PC-9 (cell line): ENCODE measurements at regions of chr3 and their contacts with region 1.

Region 1: GRCh38 chr3:186570096-186570940 is at the start of gene DNAJB11:
- DNase-seq: peak; percentile 99 to 100
- H3K4me3 ChIP-seq: peak within 1 kb of the TSS; percentile 80
- H3K27ac ChIP-seq: peak within 1 kb of the TSS; percentile 80
- H3K4me1 ChIP-seq: peaks cover 31% of the 10 kb centered on the region
- H3K27me3 ChIP-seq: no peaks in the 10 kb centered on the region
- CTCF ChIP-seq: no peak
- total RNA-seq, gene DNAJB11: 53.8 and 71.3 TPM in 2 replicates

Region 2: GRCh38 chr3:186108941-186109865 is 461.1 kb before region 1 on chr3 and contains the start of gene ETV5:
- CTCF ChIA-PET with region 1: no interaction called
- POLR2A ChIA-PET with region 1: interaction called, 3 read pairs
- intact Hi-C with region 1: loop called (anchors 10 kb)
- DNase-seq: peak; percentile 100
- H3K4me3 ChIP-seq: peak within 1 kb of the TSS; percentile 87
- H3K27ac ChIP-seq: peak within 1 kb of the TSS; percentile 80
- H3K4me1 ChIP-seq: peaks cover 40% of the 10 kb centered on the region
- H3K27me3 ChIP-seq: no peaks in the 10 kb centered on the region
- CTCF ChIP-seq: no peak
- total RNA-seq, gene ETV5: 39.3 and 65.7 TPM in 2 replicates

Region 3: GRCh38 chr3:186193534-186194450 is 376.5 kb before region 1 on chr3:
- CTCF ChIA-PET with region 1: no interaction called
- POLR2A ChIA-PET with region 1: no interaction called
- intact Hi-C with region 1: no loop called
- DNase-seq: no peak
- H3K4me3 ChIP-seq: no peak overlapping the region
- H3K27ac ChIP-seq: no peak overlapping the region
- H3K4me1 ChIP-seq: no peaks in the 10 kb centered on the region
- H3K27me3 ChIP-seq: no peaks in the 10 kb centered on the region
- CTCF ChIP-seq: no peak

Region 4: DNA sequence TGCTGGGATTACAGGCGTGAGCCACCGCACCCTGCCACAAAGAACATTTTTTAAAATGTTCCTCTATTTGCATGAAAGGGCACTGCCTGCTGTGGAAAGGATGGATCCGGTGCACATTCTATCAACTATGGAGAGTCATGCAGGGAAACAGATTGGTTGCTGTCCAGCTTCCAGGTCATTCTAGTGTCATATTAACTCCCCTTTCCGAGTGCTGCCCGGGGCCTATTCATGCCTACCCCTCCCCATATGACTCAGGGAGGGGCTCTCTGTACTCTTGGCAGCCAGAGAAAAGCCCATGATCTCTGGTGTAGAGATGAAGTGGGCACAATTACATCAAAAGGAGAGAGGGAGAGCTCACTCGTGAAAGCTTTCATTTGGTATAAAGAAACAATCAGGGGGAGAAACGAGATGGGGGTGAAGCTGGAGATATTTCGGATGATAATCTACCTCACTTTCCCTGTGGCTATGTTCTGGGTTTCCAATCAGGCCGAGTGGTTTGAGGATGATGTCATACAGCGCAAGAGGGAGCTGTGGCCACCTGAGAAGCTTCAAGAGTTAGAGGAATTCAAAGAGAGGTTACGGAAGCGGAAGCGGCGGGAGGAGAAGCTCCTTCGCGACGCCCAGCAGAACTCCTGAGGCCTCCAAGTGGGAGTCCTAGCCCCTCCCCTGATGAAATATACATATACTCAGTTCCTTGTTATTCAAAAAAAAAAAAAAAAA is 26.4 kb after region 1 on chr3:
- CTCF ChIA-PET with region 1: no interaction called
- POLR2A ChIA-PET with region 1: interaction called, 14 read pairs
- intact Hi-C with region 1: no loop called
- DNase-seq: peak; percentile 72 to 79
- H3K4me3 ChIP-seq: no peak overlapping the region
- H3K27ac ChIP-seq: peak overlapping the region; percentile 48
- H3K4me1 ChIP-seq: peaks cover 24% of the 10 kb centered on the region
- H3K27me3 ChIP-seq: no peaks in the 10 kb centered on the region
- CTCF ChIP-seq: no peak

Region 5: GRCh38 chr3:186754006-186754405 is 183.7 kb after region 1 on chr3:
- CTCF ChIA-PET with region 1: no interaction called
- POLR2A ChIA-PET with region 1: interaction called, 3 read pairs
- intact Hi-C with region 1: loop called (anchors 5 kb)
- DNase-seq: no peak
- H3K4me3 ChIP-seq: peak overlapping the region; percentile 46; the same call in 1 of the 2 replicates
- H3K27ac ChIP-seq: peak overlapping the region; percentile 91
- H3K4me1 ChIP-seq: peaks cover 31% of the 10 kb centered on the region
- H3K27me3 ChIP-seq: no peaks in the 10 kb centered on the region
- CTCF ChIP-seq: no peak

Region 6: DNA sequence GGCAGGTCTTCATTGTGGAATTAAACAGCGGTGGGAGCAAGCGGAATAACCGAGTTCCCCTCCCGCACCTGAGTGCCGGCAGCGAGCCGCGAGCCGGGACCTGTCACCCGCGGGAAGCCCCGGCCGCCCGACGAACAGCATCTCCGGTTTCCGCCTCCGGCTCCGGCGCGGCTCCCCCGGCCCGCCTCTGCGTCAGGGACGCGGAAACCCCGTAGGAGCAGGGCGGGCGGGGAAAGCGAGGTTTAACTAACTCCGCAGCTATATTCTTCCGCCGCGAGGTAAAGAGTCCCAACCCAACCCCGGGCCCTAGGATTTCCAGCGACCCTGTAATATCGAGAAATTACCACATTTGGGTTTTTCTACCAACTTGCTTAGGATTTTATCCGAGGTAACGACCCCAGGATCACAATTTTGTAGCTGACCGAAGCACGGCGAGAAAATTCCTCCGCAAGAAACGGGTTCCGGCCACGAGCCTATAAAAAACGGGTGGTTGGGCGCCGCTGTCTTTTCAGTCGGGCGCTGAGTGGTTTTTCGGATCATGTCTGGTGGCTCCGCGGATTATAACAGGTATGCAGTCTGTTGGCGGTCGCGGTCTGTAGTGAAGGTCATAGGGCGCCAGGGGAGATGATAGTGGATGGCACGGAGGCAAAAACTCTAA is 212.9 kb after region 1 on chr3 and contains the start of gene EIF4A2:
- CTCF ChIA-PET with region 1: interaction called, 3 read pairs
- POLR2A ChIA-PET with region 1: interaction called, 9 read pairs
- intact Hi-C with region 1: loop called (anchors 1 kb)
- DNase-seq: peak; percentile 85 to 95
- H3K4me3 ChIP-seq: peak within 1 kb of the TSS; percentile 92
- H3K27ac ChIP-seq: peak within 1 kb of the TSS; percentile 93
- H3K4me1 ChIP-seq: peaks cover 34% of the 10 kb centered on the region
- H3K27me3 ChIP-seq: no peaks in the 10 kb centered on the region
- CTCF ChIP-seq: no peak
- total RNA-seq, gene EIF4A2: 446 and 618 TPM in 2 replicates

Region 7: GRCh38 chr3:186821429-186822367 is 251.4 kb after region 1 on chr3:
- CTCF ChIA-PET with region 1: no interaction called
- POLR2A ChIA-PET with region 1: no interaction called
- intact Hi-C with region 1: loop called (anchors 5 kb)
- DNase-seq: no peak
- H3K4me3 ChIP-seq: no peak overlapping the region
- H3K27ac ChIP-seq: no peak overlapping the region
- H3K4me1 ChIP-seq: peaks cover 9% of the 10 kb centered on the region
- H3K27me3 ChIP-seq: no peaks in the 10 kb centered on the region
- CTCF ChIP-seq: peak; percentile 92

Region 8: DNA sequence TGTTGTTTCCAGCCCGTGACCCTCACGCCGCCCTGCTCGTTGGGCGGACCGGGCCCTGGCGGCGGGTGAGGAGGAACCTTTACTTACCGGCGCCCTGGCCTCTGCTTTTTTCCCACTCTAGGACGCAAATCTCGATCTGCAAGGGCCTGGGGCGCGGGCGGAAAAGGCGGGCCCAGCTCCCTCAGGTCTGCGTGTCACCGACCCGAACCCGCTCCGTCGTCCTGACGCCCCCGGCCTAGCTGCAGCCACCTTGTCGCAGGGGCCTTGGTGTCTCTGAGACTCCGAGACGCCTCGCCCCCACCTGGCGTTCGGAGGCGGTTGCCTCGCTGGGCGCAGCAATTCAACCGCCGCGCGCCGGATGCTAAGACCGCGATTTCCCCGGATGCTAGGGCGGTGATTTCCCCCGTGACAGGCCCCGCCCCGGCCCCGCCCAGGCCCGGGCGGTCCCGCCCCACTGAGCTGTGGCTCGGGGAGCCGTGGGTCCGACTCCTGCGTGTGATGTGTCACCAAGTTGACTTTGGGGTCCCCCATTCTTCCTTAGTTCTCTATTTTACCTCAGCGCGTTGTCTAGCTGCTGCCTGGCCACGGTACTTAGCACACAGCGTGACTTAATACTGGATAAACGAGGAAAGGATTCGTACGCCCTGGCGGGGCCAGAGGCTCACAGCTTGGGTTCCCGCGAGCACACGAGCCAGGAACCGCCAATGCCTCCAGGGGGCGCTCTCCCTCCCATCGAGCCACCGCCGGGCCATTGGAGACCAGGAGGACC is 569.0 kb after region 1 on chr3 and contains the start of gene RPL39L:
- CTCF ChIA-PET with region 1: no interaction called
- POLR2A ChIA-PET with region 1: interaction called, 11 read pairs
- intact Hi-C with region 1: no loop called
- DNase-seq: peak; percentile 83 to 92
- H3K4me3 ChIP-seq: peak within 1 kb of the TSS; percentile 73
- H3K27ac ChIP-seq: peak within 1 kb of the TSS; percentile 57
- H3K4me1 ChIP-seq: peaks cover 22% of the 10 kb centered on the region
- H3K27me3 ChIP-seq: no peaks in the 10 kb centered on the region
- CTCF ChIP-seq: peak; percentile 99
- total RNA-seq, gene RPL39L: 73.9 and 81.3 TPM in 2 replicates